Caco-2 (cell line): ENCODE measurements at regions of chr1 and their contacts with region 1.

Region 1: GRCh38 chr1:77579547-77579946 is 102.9 kb downstream of the ZZZ3 start:
- DNase-seq: no peak
- H3K4me3 ChIP-seq: no peak overlapping the region
- H3K4me3 Mint-ChIP-seq: no peak overlapping the region
- H3K27ac Mint-ChIP-seq: no peak overlapping the region
- H3K4me1 ChIP-seq: no peaks in the 10 kb centered on the region
- H3K4me1 Mint-ChIP-seq: no peaks in the 10 kb centered on the region
- H3K27me3 ChIP-seq: no peaks in the 10 kb centered on the region
- H3K27me3 Mint-ChIP-seq: no peaks in the 10 kb centered on the region
- CTCF ChIP-seq: no peak

Region 2: GRCh38 chr1:77683160-77684148 is 103.9 kb after region 1 on chr1:
- CTCF ChIA-PET with region 1: no interaction called
- POLR2A ChIA-PET with region 1: no interaction called
- intact Hi-C with region 1: loop called (anchors 10 kb)
- DNase-seq: peak; percentile 91 to 92
- H3K4me3 ChIP-seq: peak overlapping the region; percentile 87
- H3K4me3 Mint-ChIP-seq: peak overlapping the region; percentile 88
- H3K27ac Mint-ChIP-seq: peak overlapping the region; percentile 96
- H3K4me1 ChIP-seq: peaks cover 23% of the 10 kb centered on the region
- H3K4me1 Mint-ChIP-seq: peaks cover 12% of the 10 kb centered on the region
- H3K27me3 ChIP-seq: no peaks in the 10 kb centered on the region
- H3K27me3 Mint-ChIP-seq: no peaks in the 10 kb centered on the region
- CTCF ChIP-seq: peak; percentile 45 to 66

Region 3: GRCh38 chr1:77697441-77697840 is 117.9 kb after region 1 on chr1:
- CTCF ChIA-PET with region 1: no interaction called
- POLR2A ChIA-PET with region 1: no interaction called
- intact Hi-C with region 1: no loop called
- DNase-seq: no peak
- H3K4me3 ChIP-seq: no peak overlapping the region
- H3K4me3 Mint-ChIP-seq: no peak overlapping the region
- H3K27ac Mint-ChIP-seq: no peak overlapping the region
- H3K4me1 ChIP-seq: no peaks in the 10 kb centered on the region
- H3K4me1 Mint-ChIP-seq: no peaks in the 10 kb centered on the region
- H3K27me3 ChIP-seq: no peaks in the 10 kb centered on the region
- H3K27me3 Mint-ChIP-seq: no peaks in the 10 kb centered on the region
- CTCF ChIP-seq: no peak